ENCODE measurements at regions of chr6 and their contacts with region 1.

Region 1: GRCh38 chr6:93779086-93779841 is 359.9 kb upstream of the EPHA7 start:
- DNase-seq: no peak
- H3K4me3 ChIP-seq: peak overlapping the region in 1 of 4 donors; percentile 32
- H3K27ac ChIP-seq: peak overlapping the region in 3 of 4 donors; percentile 9 to 68 (median 44)
- H3K4me1 ChIP-seq: peaks cover 0 to 14% (median 6%) of the 10 kb centered on the region in 4 donors
- H3K27me3 ChIP-seq: no peaks in the 10 kb centered on the region
- CTCF ChIP-seq: no peak
- EP300 ChIP-seq: no peak
- POLR2A ChIP-seq: no peak

Region 2: DNA sequence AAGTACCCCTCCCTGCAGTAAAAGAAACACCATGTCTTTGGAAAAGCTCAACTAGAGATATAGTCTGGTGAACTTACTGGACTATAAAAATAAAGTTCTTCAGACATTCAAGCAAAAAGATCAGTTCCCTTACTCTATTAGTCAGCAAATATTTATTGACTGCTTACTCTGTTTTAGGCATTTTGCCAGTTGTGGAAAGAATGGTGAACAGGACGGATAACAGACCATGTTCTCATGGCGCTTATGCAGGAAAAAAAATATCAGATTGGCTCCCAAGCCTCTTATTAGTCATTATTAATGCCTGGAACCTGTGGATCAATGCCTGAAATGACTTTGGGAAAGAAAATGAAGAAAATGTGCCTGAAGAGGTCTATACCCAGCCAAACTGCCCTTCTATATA is 77.7 kb before region 1 on chr6:
- in situ Hi-C with region 1: no loop called
- intact Hi-C with region 1: loop called (anchors 2 kb)
- DNase-seq: no peak
- H3K4me3 ChIP-seq: no peak overlapping the region
- H3K27ac ChIP-seq: no peak overlapping the region
- H3K4me1 ChIP-seq: no peaks in the 10 kb centered on the region
- H3K27me3 ChIP-seq: no peaks in the 10 kb centered on the region
- CTCF ChIP-seq: no peak
- EP300 ChIP-seq: no peak
- POLR2A ChIP-seq: no peak